ENCODE measurements at regions of chr2 and their contacts with region 1.

Region 1: GRCh38 chr2:131682122-131682944 is 154.6 kb downstream of the CCDC74A start:
- DNase-seq: peak; percentile 79 to 92 (median 90)
- H3K4me3 ChIP-seq: peak overlapping the region; percentile 52 to 93 (median 76)
- H3K27ac ChIP-seq: peak overlapping the region in 54 of 59 donors; percentile 11 to 91 (median 72)
- H3K27me3 ChIP-seq: peaks cover 0 to 3% (median 0%) of the 10 kb centered on the region in 45 donors
- CTCF ChIP-seq: peak in 48 of 56 donors; percentile 11 to 65 (median 38)

Region 2: GRCh38 chr2:131801210-131801744 is 118.9 kb after region 1 on chr2:
- intact Hi-C with region 1: loop called in 1 of 2 experiments (anchors 5 kb)
- DNase-seq: no peak
- H3K4me3 ChIP-seq: peak overlapping the region in 49 of 59 donors; percentile 17 to 64 (median 41)
- H3K27ac ChIP-seq: no peak overlapping the region
- H3K27me3 ChIP-seq: peaks cover 0 to 4% (median 0%) of the 10 kb centered on the region in 45 donors
- CTCF ChIP-seq: no peak

Measured in dorsolateral prefrontal cortex (tissue), 120 donors.